ENCODE measurements at regions of chr6 and their contacts with region 1.

Region 1: GRCh38 chr6:11496152-11497060 is 41.1 kb upstream of the TMEM170B start:
- DNase-seq: peak; percentile 83 to 92 (median 86)
- H3K4me3 ChIP-seq: peak overlapping the region in 1 of 7 experiments; percentile 9
- H3K27ac ChIP-seq: no peak overlapping the region
- H3K4me1 ChIP-seq: peaks cover 0 to 9% (median 8%) of the 10 kb centered on the region in 4 experiments
- H3K27me3 ChIP-seq: no peaks in the 10 kb centered on the region

Region 2: GRCh38 chr6:11139056-11139960 is 357.1 kb before region 1 on chr6:
- CTCF ChIA-PET with region 1: interaction called, 89 read pairs
- POLR2A ChIA-PET with region 1: no interaction called
- DNase-seq: peak in 1 of 3 donors; percentile 11
- H3K4me3 ChIP-seq: no peak overlapping the region
- H3K27ac ChIP-seq: no peak overlapping the region
- H3K4me1 ChIP-seq: peaks cover 0 to 5% (median 0%) of the 10 kb centered on the region in 4 experiments
- H3K27me3 ChIP-seq: no peaks in the 10 kb centered on the region

Region 3: GRCh38 chr6:11155589-11155988 is 340.8 kb before region 1 on chr6:
- CTCF ChIA-PET with region 1: interaction called, 10 read pairs
- POLR2A ChIA-PET with region 1: no interaction called
- DNase-seq: peak in 2 of 3 donors; percentile 34 to 47
- H3K4me3 ChIP-seq: no peak overlapping the region
- H3K27ac ChIP-seq: no peak overlapping the region
- H3K4me1 ChIP-seq: peaks cover 0 to 5% (median 2%) of the 10 kb centered on the region in 4 experiments
- H3K27me3 ChIP-seq: no peaks in the 10 kb centered on the region

Region 4: DNA sequence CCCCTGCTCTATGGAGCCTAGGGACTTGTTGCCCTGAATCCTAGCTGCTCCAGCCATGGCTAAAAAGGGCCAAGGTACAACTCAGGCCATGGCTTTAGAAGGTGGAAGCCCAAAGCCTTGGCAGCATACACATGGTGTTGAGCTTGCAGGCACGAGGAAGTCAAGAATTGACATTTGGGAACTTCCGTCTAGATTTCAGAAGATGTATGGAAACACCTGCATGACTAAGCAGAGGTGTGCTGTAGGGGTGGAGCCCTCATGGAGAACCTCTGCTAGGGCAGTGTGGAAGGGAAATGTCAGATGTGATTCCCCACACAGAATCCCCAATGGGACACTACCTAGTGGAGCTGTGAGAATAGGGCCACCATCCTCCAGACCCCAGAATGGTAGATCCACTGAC is 53.9 kb before region 1 on chr6:
- CTCF ChIA-PET with region 1: no interaction called
- POLR2A ChIA-PET with region 1: no interaction called
- DNase-seq: no peak
- H3K4me3 ChIP-seq: no peak overlapping the region
- H3K27ac ChIP-seq: no peak overlapping the region
- H3K4me1 ChIP-seq: no peaks in the 10 kb centered on the region
- H3K27me3 ChIP-seq: no peaks in the 10 kb centered on the region

Region 5: GRCh38 chr6:11469684-11470083 is 26.7 kb before region 1 on chr6:
- CTCF ChIA-PET with region 1: no interaction called
- POLR2A ChIA-PET with region 1: no interaction called
- DNase-seq: no peak
- H3K4me3 ChIP-seq: no peak overlapping the region
- H3K27ac ChIP-seq: no peak overlapping the region
- H3K4me1 ChIP-seq: no peaks in the 10 kb centered on the region
- H3K27me3 ChIP-seq: peaks cover 0 to 4% (median 0%) of the 10 kb centered on the region in 5 experiments

Region 6: DNA sequence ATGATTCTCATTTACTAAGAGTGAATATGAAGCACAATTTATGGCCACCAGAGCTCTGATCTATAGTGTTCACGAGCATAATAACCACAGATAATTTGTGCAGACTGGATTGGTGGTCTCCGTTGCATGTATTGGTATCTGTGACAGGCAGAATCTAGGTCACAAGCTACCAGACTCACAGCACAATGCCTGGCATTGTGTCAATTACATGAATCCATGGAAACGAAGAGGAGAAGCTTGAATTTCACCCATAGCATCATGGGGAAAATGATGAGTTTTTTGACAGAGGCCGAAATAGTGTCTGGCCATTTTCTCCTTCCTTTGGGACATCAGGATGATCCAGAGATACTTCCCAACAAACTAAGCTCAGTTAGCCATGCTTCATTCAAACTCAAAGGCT is 11.1 kb before region 1 on chr6:
- CTCF ChIA-PET with region 1: interaction called, 24 read pairs
- POLR2A ChIA-PET with region 1: no interaction called
- DNase-seq: no peak
- H3K4me3 ChIP-seq: no peak overlapping the region
- H3K27ac ChIP-seq: no peak overlapping the region
- H3K4me1 ChIP-seq: no peaks in the 10 kb centered on the region
- H3K27me3 ChIP-seq: peaks cover 0 to under 1% (median 0%) of the 10 kb centered on the region in 5 experiments

Region 7: GRCh38 chr6:11589261-11589660 is 92.9 kb after region 1 on chr6:
- CTCF ChIA-PET with region 1: no interaction called
- POLR2A ChIA-PET with region 1: no interaction called
- DNase-seq: no peak
- H3K4me3 ChIP-seq: no peak overlapping the region
- H3K27ac ChIP-seq: no peak overlapping the region
- H3K4me1 ChIP-seq: no peaks in the 10 kb centered on the region
- H3K27me3 ChIP-seq: no peaks in the 10 kb centered on the region